ENCODE measurements at regions of chr3 and their contacts with region 1.

Region 1: DNA sequence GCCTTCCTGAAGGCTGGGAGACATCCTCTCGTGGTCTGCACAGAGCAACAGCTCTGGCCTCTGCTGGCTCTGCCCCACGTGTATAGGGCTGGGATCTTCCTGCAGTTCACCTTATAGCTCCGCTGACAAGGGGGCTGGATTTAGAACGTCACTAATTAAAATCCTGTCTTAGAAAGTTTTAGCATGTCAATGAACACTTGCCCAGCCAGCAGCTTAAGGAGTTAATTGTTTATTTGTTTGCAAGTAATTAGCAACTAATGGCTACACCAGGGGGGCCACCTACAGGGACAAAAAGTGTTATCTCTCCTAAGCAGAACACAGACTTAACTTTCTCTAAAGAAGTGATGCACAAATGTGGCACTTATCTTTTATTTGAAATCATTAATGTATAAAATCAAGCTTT is at the start of gene HESX1:
- DNase-seq: peak; percentile 64
- ATAC-seq: peak; percentile 99
- H3K4me3 Mint-ChIP-seq: peak within 1 kb of the TSS; percentile 53
- H3K27ac Mint-ChIP-seq: peak within 1 kb of the TSS; percentile 95
- H3K4me1 Mint-ChIP-seq: peaks cover 44% of the 10 kb centered on the region
- H3K27me3 Mint-ChIP-seq: peaks cover 25% of the 10 kb centered on the region
- CTCF ChIP-seq: no peak
- total RNA-seq, gene HESX1: 4.5 to 5.6 TPM (median 4.8 TPM) in 3 replicates

Region 2: GRCh38 chr3:56645407-56645806 is 554.5 kb before region 1 on chr3:
- CTCF ChIA-PET with region 1: no interaction called
- POLR2A ChIA-PET with region 1: no interaction called
- DNase-seq: no peak
- ATAC-seq: no peak
- H3K4me3 Mint-ChIP-seq: no peak overlapping the region
- H3K27ac Mint-ChIP-seq: 0 out of 2 replicates have a peak overlapping the region, but pooled peaks have one; percentile 7
- H3K4me1 Mint-ChIP-seq: no peaks in the 10 kb centered on the region
- H3K27me3 Mint-ChIP-seq: no peaks in the 10 kb centered on the region
- CTCF ChIP-seq: no peak

Region 3: GRCh38 chr3:57169872-57170623 is 29.8 kb before region 1 on chr3:
- CTCF ChIA-PET with region 1: interaction called, 11 read pairs
- POLR2A ChIA-PET with region 1: interaction called, 4 read pairs
- DNase-seq: peak; percentile 90
- ATAC-seq: peak; percentile 83
- H3K4me3 Mint-ChIP-seq: peak overlapping the region; percentile 57
- H3K27ac Mint-ChIP-seq: peak overlapping the region; percentile 72; the same call in 1 of the 2 replicates
- H3K4me1 Mint-ChIP-seq: peaks cover 36% of the 10 kb centered on the region
- H3K27me3 Mint-ChIP-seq: peaks cover 22% of the 10 kb centered on the region
- CTCF ChIP-seq: peak; percentile 75

Region 4: DNA sequence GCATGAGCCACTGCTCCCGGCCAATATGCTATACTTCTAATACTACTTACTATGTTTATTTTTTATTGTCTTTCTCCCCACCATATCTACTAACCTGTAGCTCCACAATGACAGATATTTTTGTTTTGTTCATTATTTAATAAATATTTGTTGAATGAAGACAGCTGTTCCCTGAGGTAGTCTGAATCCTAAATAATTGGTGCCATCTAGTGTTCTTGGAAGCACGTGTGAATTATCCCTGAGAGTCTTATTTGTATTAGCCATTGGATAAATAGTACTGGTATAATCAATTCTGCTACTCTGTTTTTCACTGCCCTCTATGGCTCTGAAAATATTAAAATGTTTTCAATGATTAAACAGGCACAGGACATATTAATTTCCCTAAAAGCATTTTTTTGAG is 22.0 kb after region 1 on chr3:
- CTCF ChIA-PET with region 1: interaction called, 13 read pairs
- POLR2A ChIA-PET with region 1: interaction called, 11 read pairs
- DNase-seq: no peak
- ATAC-seq: peak; percentile 59
- H3K4me3 Mint-ChIP-seq: no peak overlapping the region
- H3K27ac Mint-ChIP-seq: no peak overlapping the region
- H3K4me1 Mint-ChIP-seq: peaks cover 13% of the 10 kb centered on the region
- H3K27me3 Mint-ChIP-seq: no peaks in the 10 kb centered on the region
- CTCF ChIP-seq: no peak

Region 5: DNA sequence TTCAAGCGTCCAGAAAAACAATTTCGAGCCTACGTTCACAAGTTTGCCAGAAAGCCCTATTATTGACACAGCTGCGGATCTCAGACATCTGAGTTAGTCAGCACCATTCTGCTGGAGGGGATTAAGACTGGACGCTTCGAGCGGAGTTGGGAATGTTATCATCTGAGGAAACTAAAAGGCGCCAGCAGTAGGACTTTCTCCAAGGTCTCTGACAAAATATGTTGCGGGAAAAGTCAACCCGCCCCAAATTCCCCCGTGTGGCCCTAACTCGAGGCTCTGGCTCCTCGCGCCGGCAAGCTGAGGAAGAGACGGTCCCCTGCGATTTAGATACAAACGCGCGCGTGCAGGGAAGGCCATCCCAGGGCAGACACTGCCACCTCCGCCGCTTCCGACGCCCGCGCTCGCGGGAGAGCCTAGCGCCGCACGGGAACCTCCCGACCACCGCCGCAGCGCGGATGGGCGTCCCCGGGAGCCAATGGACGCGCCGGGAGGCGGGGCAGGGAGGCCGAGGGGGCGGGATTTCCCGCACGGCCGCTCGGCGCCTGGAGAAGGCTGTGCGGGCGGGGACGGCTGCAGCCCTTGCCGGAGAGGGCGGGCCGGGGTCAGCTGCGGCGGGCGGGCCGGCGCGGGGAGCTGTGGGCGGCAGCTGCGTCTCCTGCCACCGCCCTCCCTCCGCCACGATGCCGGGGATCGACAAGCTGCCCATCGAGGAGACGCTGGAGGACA is 27.5 kb after region 1 on chr3 and contains the start of gene APPL1:
- CTCF ChIA-PET with region 1: interaction called, 13 read pairs
- POLR2A ChIA-PET with region 1: interaction called, 11 read pairs
- DNase-seq: peak; percentile 97
- ATAC-seq: peak; percentile 98
- H3K4me3 Mint-ChIP-seq: peak within 1 kb of the TSS; percentile 91
- H3K27ac Mint-ChIP-seq: peak within 1 kb of the TSS; percentile 82
- H3K4me1 Mint-ChIP-seq: peaks cover 26% of the 10 kb centered on the region
- H3K27me3 Mint-ChIP-seq: peaks cover 6% of the 10 kb centered on the region; the same call in 1 of the 2 replicates
- CTCF ChIP-seq: no peak
- total RNA-seq, gene APPL1: 31.2 to 35.8 TPM (median 32.0 TPM) in 3 replicates

Measured in WTC11 (cell line).